ENCODE measurements at regions of chr14 and their contacts with region 1.

Region 1: GRCh38 chr14:29759521-29760340 is 167.9 kb downstream of the PRKD1 start:
- DNase-seq: no peak
- H3K4me3 ChIP-seq: no peak overlapping the region
- H3K27ac ChIP-seq: no peak overlapping the region
- H3K4me1 ChIP-seq: peaks cover 0 to 9% (median 3%) of the 10 kb centered on the region in 4 donors
- H3K27me3 ChIP-seq: no peaks in the 10 kb centered on the region
- CTCF ChIP-seq: no peak
- EP300 ChIP-seq: no peak
- POLR2A ChIP-seq: no peak

Region 2: GRCh38 chr14:29832035-29832434 is 72.3 kb after region 1 on chr14:
- intact Hi-C with region 1: loop called (anchors 2 kb)
- DNase-seq: no peak
- H3K4me3 ChIP-seq: no peak overlapping the region
- H3K27ac ChIP-seq: no peak overlapping the region
- H3K4me1 ChIP-seq: no peaks in the 10 kb centered on the region
- H3K27me3 ChIP-seq: no peaks in the 10 kb centered on the region
- CTCF ChIP-seq: no peak
- EP300 ChIP-seq: no peak
- POLR2A ChIP-seq: no peak

Measured in sigmoid colon (tissue), 7 donors.